T-cell (primary cell): ENCODE measurements at regions of chr10 and their contacts with region 1.

Region 1: DNA sequence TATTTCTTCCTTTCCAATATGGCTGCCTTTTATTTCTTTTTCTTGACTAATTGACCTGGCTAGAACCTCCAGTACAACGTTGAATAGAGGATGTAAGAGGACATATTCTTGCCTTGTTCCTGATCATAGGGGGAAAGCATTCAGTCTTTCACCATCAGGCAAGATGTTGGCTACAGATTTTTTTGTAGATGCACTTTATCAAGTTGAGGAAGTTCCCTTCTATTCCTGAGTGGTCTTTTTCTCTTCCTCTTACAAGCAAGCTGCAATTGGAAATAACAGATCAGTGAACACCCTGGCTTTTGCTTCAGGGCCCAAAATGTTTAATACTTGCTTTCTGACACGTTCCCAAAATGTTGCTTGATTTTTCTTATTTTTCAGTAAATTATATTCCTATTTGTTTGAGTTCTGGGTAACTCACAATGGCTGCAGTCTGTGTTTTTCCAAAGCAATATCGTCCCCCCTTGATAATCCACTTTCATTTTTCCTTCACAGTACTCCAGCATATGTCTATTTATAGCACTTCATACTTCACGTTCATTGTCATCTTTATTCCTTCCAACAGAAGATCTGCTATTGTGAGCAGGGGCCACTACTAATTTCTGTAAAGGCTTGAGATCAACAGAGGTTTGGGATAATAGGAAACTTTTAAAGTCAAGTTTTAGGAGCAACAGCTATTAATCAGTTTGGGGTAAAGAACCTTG is 11.7 kb downstream of the CPEB3 start:
- DNase-seq: no peak
- ATAC-seq: no peak
- H3K4me3 ChIP-seq: no peak overlapping the region
- H3K4me3 Mint-ChIP-seq: no peak overlapping the region
- H3K27ac ChIP-seq: no peak overlapping the region
- H3K27ac Mint-ChIP-seq: no peak overlapping the region
- H3K4me1 ChIP-seq: no peaks in the 10 kb centered on the region
- H3K4me1 Mint-ChIP-seq: peaks cover 0 to under 1% (median under 1%) of the 10 kb centered on the region in 3 donors
- H3K27me3 ChIP-seq: no peaks in the 10 kb centered on the region
- H3K27me3 Mint-ChIP-seq: no peaks in the 10 kb centered on the region

Region 2: DNA sequence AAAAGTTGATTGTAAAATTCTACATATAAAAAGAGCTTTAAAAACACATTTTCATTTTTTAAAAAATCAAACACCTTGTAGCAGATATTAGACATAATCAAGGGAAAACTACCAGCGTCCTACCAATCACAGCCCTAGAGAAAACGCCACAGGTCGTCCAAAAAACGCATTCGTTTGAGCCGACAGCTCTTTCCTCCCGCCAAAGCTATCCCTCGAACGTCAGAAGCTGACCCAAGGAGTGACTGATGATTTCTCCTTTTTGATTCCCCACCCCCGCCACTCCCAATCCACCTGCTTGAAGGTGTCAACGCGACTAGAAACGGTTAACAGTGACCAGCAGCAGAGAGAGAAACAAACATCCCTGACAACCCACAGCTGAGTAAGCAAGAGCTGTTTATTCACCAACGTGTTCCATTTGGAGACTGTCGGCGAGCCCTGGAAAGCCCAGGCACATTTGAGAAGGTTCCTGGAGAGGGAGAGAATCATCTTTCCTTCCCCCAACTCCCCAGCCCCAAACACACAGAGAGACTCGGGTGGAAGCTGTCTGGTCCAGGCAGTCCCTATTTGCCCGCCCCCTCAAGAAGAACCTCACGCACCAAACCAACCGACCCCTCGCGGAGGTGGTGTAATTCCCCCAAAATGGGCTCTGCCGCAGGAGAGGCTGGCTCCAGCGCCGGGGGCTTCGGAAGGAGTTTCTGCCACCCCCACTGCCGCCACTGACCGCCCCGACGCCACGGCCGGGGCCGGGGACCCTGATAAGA is 11.1 kb after region 1 on chr10:
- CTCF ChIA-PET with region 1: interaction called in 1 of 2 experiments, 12 read pairs
- POLR2A ChIA-PET with region 1: interaction called in 1 of 2 experiments, 6 read pairs
- DNase-seq: peak in 28 of 35 experiments; percentile 2 to 56 (median 14)
- ATAC-seq: peak; percentile 16 to 32 (median 26)
- H3K4me3 ChIP-seq: peak overlapping the region; percentile 93 to 96
- H3K4me3 Mint-ChIP-seq: peak overlapping the region; percentile 93 to 94 (median 94)
- H3K27ac ChIP-seq: peak overlapping the region; percentile 48
- H3K27ac Mint-ChIP-seq: peak overlapping the region in 1 of 2 donors; percentile 80
- H3K4me1 ChIP-seq: peaks cover 6 to 26% of the 10 kb centered on the region in 2 experiments
- H3K4me1 Mint-ChIP-seq: peaks cover 28 to 31% (median 28%) of the 10 kb centered on the region in 3 donors
- H3K27me3 ChIP-seq: no peaks in the 10 kb centered on the region
- H3K27me3 Mint-ChIP-seq: no peaks in the 10 kb centered on the region